Cardiac septum (tissue), 1 donor: ENCODE measurements at regions of chr4 and their contacts with region 1.

Region 1: GRCh38 chr4:120801137-120801758 is 121.3 kb downstream of the PRDM5 start:
- DNase-seq: peak; percentile 76

Region 2: GRCh38 chr4:120466429-120466828 is 334.8 kb before region 1 on chr4:
- intact Hi-C with region 1: no loop called
- DNase-seq: no peak

Region 3: GRCh38 chr4:120829113-120829831 is 28.0 kb after region 1 on chr4:
- intact Hi-C with region 1: loop called (anchors 1 kb)
- DNase-seq: no peak

Region 4: DNA sequence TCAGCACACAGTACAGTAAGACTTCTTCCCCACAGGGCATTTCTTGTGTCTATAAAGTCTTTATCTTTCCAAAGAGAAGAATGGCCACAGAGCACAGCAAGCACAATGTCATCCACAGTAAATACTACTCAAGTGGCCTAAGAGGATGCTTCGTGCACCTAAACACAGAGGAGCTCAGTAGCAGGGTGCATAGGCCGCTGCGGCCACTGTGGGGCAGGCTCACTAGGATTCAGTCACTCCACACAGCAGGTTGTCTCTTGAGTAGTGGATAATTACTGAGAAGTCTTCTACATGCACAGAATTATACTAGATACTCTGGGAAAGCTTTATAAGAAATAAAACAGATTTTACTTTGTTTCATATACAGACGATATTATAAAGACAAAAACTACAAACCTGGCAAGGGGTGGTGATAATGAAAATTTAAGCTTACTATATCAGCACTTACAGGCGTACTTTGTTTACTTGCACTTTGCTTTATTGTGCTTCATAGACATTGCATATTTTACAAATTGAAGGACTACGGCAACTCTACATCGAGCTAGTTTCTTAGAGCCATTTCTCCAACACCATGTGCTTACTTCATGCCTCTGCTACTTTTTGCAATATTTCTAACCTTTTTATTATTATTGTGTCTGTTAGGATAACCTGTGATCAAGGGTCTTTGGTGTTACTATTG is 42.7 kb after region 1 on chr4:
- intact Hi-C with region 1: no loop called
- DNase-seq: no peak

Region 5: GRCh38 chr4:120865985-120866384 is 64.7 kb after region 1 on chr4:
- intact Hi-C with region 1: no loop called
- DNase-seq: no peak

Region 6: DNA sequence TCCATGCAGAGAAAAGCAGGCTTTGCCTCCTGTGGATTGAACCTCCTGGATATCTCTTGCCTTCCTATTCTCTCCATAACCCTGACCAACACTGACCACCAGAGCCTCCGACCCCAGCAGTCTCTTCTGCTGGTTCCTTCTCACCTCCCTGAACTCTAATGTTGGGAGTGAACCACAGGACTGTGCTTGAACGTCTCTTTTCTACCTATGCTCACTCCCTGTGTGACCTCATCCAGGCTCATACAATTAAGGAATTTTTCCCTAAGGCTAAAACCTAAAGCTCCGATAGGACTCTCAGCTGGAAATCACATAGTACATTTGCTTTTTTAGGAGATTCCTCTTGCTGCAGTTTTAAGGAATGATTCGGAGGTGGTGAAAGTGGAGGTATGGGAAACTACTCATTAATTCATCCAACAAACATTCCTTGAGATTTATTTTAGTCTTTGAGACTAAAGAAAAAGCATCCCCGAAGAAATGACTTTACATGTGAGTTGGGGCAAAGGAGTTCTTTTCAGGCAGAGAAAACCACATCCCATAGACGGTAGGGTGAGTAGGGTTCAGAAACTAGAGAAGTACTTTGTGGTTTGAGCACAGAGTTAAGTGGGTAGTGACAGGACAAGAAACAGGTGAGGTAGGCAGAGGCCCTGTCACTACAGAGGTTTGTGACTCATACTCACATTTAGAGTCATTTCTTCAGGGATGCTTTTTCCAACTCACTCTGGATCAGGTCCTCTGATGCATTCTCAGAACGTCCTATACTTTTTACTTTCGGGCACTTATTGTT is 240.3 kb after region 1 on chr4:
- intact Hi-C with region 1: no loop called
- DNase-seq: no peak